ENCODE measurements at regions of chr2 and their contacts with region 1.

Region 1: GRCh38 chr2:68487773-68488355 is 20.5 kb downstream of the APLF start:
- DNase-seq: no peak
- ATAC-seq: no peak
- H3K4me3 ChIP-seq: no peak overlapping the region
- H3K27ac ChIP-seq: no peak overlapping the region
- H3K4me1 ChIP-seq: peaks cover 4% of the 10 kb centered on the region
- H3K27me3 ChIP-seq: no peaks in the 10 kb centered on the region
- CTCF ChIP-seq: peak; percentile 49

Region 2: GRCh38 chr2:68018727-68019126 is 469.1 kb before region 1 on chr2:
- intact Hi-C with region 1: no loop called
- DNase-seq: no peak
- ATAC-seq: no peak
- H3K4me3 ChIP-seq: no peak overlapping the region
- H3K27ac ChIP-seq: no peak overlapping the region
- H3K4me1 ChIP-seq: no peaks in the 10 kb centered on the region
- H3K27me3 ChIP-seq: no peaks in the 10 kb centered on the region
- CTCF ChIP-seq: no peak

Region 3: DNA sequence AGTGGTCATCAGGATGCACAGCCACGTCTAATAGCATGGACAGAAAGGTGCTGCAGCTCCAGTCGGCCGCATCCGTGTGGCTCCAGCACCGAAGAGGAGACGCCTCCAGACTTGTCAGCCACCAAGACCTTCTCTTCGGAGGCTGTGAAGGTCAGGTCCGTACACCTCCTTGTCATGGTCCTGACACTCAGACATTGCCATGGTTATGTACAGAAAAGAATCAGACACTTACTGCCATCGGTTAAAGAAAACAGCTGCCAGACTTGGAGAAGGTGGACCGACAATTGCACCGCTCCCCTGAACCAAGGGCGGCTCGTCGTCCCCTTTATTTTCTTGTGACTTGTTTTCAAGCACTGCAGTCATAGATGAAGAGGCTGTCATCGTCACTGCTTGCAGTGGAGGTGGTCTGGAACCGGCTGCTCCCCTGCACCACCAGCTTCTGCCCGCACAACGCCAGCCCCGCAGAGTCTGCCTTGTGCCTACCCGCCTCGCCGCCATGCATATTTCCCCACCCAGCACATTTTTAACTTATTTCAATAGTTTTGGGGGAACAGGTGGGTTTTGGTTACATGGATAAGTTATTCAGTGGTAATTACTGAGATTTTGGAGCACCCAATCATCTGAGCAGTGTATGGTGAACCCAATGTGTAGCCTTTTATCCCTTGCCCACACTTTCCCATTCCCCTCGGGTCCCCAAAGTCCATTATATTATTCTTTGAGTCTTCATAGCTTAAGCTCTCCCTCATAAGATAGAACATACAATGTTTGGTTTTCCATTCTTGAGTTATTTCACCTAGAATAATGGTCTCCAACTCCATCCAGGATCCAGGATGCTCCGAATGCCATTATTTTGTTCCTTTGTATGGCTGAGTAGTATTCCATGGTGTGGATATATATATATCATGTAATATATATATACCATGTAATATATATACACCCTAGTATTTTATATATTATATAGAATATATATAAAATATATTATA is 38.9 kb before region 1 on chr2:
- intact Hi-C with region 1: no loop called
- DNase-seq: peak in 1 of 2 donors; percentile 61
- ATAC-seq: peak; percentile 42 to 68 (median 50)
- H3K4me3 ChIP-seq: no peak overlapping the region
- H3K27ac ChIP-seq: no peak overlapping the region
- H3K4me1 ChIP-seq: no peaks in the 10 kb centered on the region
- H3K27me3 ChIP-seq: no peaks in the 10 kb centered on the region
- CTCF ChIP-seq: no peak

Region 4: GRCh38 chr2:68594674-68595492 is 107.0 kb after region 1 on chr2:
- intact Hi-C with region 1: loop called in 1 of 2 experiments (anchors 10 kb)
- DNase-seq: peak in 1 of 2 donors; percentile 17
- ATAC-seq: no peak
- H3K4me3 ChIP-seq: peak overlapping the region; percentile 20
- H3K27ac ChIP-seq: no peak overlapping the region
- H3K4me1 ChIP-seq: no peaks in the 10 kb centered on the region
- H3K27me3 ChIP-seq: no peaks in the 10 kb centered on the region
- CTCF ChIP-seq: peak; percentile 52

Region 5: DNA sequence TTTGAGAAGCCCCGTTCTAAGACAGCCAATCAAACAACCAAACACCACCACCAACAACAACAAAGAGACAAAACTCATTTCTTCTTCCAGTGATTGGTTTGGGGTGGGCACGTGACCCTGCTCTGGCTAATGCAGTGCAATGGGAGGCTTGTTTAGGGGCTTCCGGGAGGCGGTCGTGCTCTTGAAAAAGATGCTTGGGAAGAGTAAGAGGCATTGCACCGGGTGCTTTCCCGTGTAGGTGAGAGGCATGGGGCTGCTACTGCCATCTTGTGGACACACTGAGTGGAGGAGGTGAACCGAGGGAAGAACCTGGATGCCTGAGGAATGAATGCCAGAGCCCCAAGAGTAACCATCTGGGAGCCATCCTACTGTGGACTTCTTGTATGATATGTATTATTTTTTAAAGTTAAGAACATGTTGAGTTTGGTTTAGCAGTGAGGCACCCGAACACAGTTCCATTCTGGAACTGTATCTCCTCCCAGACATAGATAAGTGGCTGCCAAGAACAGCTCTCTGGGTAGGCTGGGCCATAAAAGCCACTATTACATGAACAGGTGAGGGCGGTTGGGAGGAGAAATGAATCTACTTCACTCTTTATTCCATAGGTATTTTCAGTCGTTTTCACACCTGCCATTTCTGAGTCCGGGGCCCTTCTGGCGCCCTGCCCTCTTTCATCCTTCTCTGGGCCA is 227.6 kb after region 1 on chr2:
- intact Hi-C with region 1: loop called in 1 of 2 experiments (anchors 5 kb)
- DNase-seq: peak; percentile 30 to 57
- ATAC-seq: peak; percentile 64 to 80 (median 78)
- H3K4me3 ChIP-seq: no peak overlapping the region
- H3K27ac ChIP-seq: no peak overlapping the region
- H3K4me1 ChIP-seq: no peaks in the 10 kb centered on the region
- H3K27me3 ChIP-seq: no peaks in the 10 kb centered on the region
- CTCF ChIP-seq: peak; percentile 62

Region 6: DNA sequence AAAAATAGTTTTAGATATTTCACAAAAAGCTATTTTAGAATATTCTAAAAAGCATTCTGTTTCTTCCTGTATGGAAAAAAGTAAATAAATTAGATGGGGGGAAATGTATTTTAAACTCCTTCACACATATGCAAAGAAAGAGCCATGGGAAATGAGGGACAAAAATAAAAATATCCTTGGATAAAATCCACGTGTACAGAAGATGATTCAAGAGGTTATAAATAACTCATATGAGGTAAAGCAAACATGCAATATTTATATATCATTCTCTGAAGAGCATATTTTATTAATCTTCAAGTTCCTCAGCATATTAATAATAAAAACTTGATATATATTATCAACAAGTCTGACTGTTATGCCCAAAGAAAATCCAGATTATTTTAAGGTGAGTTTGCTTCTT is 908.0 kb after region 1 on chr2:
- intact Hi-C with region 1: no loop called
- DNase-seq: no peak
- ATAC-seq: peak; percentile 70 to 90 (median 81)
- H3K4me3 ChIP-seq: no peak overlapping the region
- H3K27ac ChIP-seq: peak overlapping the region; percentile 64
- H3K4me1 ChIP-seq: peaks cover 17% of the 10 kb centered on the region
- H3K27me3 ChIP-seq: no peaks in the 10 kb centered on the region
- CTCF ChIP-seq: no peak

Measured in psoas muscle (tissue), 8 donors.